ENCODE measurements at regions of chr1 and their contacts with region 1.

Region 1: DNA sequence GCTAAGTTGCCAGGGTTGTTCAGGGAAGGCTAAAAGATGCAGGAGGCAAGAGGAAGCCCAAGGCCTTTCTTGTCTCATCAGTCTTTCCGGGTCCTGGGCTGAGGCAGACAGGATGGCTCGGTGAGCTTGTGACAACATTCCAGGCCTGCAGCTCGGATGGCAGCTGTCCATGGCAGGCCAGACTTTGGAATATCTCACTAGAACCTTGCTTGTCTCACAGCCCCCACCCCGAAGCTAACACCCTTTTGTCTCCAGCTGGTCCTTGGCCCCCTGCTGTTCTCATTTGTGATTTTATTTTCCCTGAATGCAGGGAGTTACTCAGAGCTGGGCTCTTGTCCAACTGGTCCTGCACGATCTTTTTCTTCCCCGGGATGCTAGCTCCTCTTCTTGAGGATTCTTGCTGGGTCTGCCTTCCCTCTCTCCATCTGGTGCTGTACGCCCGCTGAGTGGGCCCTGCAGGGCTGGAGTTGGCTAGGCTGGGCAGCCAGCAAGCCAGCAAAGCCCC is 477.2 kb upstream of the CAMK1G start:
- DNase-seq: no peak
- ATAC-seq: no peak
- H3K4me3 ChIP-seq: no peak overlapping the region
- H3K27ac ChIP-seq: no peak overlapping the region
- H3K4me1 ChIP-seq: no peaks in the 10 kb centered on the region
- H3K27me3 ChIP-seq: peaks cover 0 to 9% (median 0%) of the 10 kb centered on the region in 7 donors
- CTCF ChIP-seq: no peak

Region 2: GRCh38 chr1:209012443-209013196 is 93.7 kb before region 1 on chr1:
- intact Hi-C with region 1: no loop called
- DNase-seq: no peak
- ATAC-seq: no peak
- H3K4me3 ChIP-seq: no peak overlapping the region
- H3K27ac ChIP-seq: no peak overlapping the region
- H3K4me1 ChIP-seq: no peaks in the 10 kb centered on the region
- H3K27me3 ChIP-seq: no peaks in the 10 kb centered on the region
- CTCF ChIP-seq: no peak

Region 3: DNA sequence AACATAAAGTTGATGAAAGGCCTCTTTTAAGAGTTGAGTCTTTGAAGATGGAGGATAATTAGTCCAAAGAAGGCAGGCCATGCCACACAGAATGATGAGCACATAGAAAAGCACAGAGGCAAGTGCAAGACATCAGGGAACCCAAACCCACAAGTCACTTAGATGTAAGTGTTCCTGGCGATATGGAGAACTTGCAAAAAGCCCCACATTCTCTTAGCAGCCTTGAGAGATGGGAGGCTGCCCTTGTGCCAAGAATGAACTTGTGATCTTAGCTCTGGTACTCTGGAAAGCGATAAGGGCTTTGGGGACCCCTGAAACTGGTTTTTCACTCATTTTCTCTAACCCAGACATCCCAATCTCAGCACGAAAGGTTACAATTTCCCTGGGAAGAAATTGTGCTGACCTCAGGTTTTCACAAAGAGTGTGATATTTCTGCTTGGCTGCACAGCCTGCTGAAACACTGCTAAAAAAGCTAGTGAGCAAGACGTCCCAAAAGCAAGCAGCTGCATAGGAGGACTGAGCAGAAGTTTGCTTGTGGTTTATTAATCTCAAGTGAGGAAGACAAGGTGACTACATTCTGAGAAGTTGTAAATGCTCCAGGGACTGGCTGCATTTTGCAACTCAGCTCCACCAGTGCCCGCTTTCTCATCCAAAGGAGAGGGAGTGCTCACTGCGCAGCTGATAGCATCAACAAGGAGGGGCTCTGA is 19.6 kb before region 1 on chr1:
- intact Hi-C with region 1: loop called in 1 of 10 experiments (anchors 1 kb)
- DNase-seq: no peak
- ATAC-seq: no peak
- H3K4me3 ChIP-seq: no peak overlapping the region
- H3K27ac ChIP-seq: no peak overlapping the region
- H3K4me1 ChIP-seq: no peaks in the 10 kb centered on the region
- H3K27me3 ChIP-seq: peaks cover 0 to 4% (median 0%) of the 10 kb centered on the region in 7 donors
- CTCF ChIP-seq: no peak

Region 4: GRCh38 chr1:209134001-209134400 is 27.7 kb after region 1 on chr1:
- intact Hi-C with region 1: no loop called
- DNase-seq: no peak
- ATAC-seq: no peak
- H3K4me3 ChIP-seq: no peak overlapping the region
- H3K27ac ChIP-seq: no peak overlapping the region
- H3K4me1 ChIP-seq: no peaks in the 10 kb centered on the region
- H3K27me3 ChIP-seq: peaks cover 0 to 5% (median 0%) of the 10 kb centered on the region in 7 donors
- CTCF ChIP-seq: no peak

Measured in heart right ventricle (tissue), 16 donors.